Dorsolateral prefrontal cortex (tissue), 120 donors: ENCODE measurements at regions of chr3 and their contacts with region 1.

Region 1: GRCh38 chr3:20185701-20186598 is at the start of gene SGO1:
- DNase-seq: peak; percentile 99
- H3K4me3 ChIP-seq: peak within 1 kb of the TSS; percentile 55 to 98 (median 77)
- H3K27ac ChIP-seq: peak within 1 kb of the TSS; percentile 58 to 97 (median 90)
- H3K27me3 ChIP-seq: no peaks in the 10 kb centered on the region
- CTCF ChIP-seq: peak in 36 of 56 donors; percentile 3 to 56 (median 26)
- total RNA-seq, gene SGO1: 0.19 to 0.95 (median 0.43) TPM in 15 of 120 experiments, not detected in the others

Region 2: GRCh38 chr3:19885468-19885867 is 300.5 kb before region 1 on chr3:
- intact Hi-C with region 1: loop called in 1 of 2 experiments (anchors 5 kb)
- DNase-seq: no peak
- H3K4me3 ChIP-seq: no peak overlapping the region
- H3K27ac ChIP-seq: no peak overlapping the region
- H3K27me3 ChIP-seq: no peaks in the 10 kb centered on the region
- CTCF ChIP-seq: peak; percentile 25 to 79 (median 60)

Region 3: DNA sequence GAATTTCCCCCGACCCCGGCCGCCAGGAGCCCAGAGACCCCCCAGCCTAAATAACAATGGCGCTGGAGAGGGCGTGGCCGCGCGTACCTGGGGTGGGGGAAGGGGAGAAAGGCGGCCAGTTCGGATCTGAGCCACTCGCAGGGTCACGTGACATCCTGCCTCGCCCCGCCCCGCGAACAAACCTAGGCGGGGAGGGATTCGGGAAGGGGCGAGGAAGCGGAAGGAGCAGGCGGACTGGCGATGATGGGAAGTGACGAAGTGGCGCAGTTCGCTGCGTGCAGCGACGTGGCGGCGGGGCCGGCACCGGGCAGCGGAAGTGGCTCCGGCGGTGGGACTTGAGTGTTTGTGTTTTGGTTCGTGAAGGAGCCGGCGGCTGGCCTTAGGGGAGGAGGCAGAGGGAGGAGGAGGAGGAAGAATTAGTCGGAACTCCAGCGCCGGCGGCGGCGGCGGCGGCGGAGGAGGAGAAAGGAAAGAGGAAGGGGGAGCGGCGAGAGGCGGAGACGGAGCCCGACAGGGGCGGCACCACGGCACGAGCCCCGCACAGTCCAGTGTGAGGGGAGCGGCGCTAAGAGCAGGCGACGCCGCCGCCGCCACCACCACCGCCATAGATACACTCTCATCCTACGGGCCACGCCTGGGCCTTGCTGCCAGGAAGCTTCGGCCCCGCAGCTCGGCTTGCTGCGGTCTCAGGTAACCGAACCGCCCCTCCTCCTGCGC is 239.0 kb before region 1 on chr3 and contains the start of gene RAB5A:
- intact Hi-C with region 1: loop called (anchors 2 to 5 kb)
- DNase-seq: peak; percentile 91 to 97 (median 95)
- H3K4me3 ChIP-seq: peak within 1 kb of the TSS; percentile 61 to 100 (median 95)
- H3K27ac ChIP-seq: peak within 1 kb of the TSS; percentile 66 to 99 (median 93)
- H3K27me3 ChIP-seq: no peaks in the 10 kb centered on the region
- CTCF ChIP-seq: peak in 27 of 56 donors; percentile 3 to 49 (median 20)
- total RNA-seq, gene RAB5A: 49.8 to 119 (median 94.4) TPM

Region 4: DNA sequence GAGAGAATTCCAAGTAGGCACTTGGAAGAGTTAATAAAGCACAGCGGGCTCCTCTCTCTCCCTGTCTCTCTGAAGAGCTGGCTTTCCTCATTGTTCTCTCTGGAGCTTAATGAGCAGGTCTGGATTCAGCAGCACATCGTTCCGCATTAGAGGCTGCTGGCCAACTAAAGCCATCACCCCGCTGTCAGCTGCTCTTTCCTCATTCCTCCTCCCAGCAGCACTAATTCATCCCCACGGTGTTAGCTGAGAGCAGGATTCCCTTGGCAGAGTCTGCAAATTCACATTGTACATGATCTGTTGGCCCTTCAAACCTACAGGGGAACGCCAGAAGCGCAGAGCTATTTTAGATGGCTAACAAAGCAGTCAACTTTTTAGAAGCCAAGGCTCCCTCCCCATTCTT is 44.1 kb before region 1 on chr3:
- intact Hi-C with region 1: loop called in 1 of 2 experiments (anchors 5 kb)
- DNase-seq: peak; percentile 27 to 80 (median 68)
- H3K4me3 ChIP-seq: peak overlapping the region in 14 of 59 donors; percentile 1 to 43 (median 19)
- H3K27ac ChIP-seq: peak overlapping the region in 55 of 59 donors; percentile 4 to 86 (median 63)
- H3K27me3 ChIP-seq: no peaks in the 10 kb centered on the region
- CTCF ChIP-seq: peak in 1 of 56 donors; percentile 11